AG04450 (cell line): ENCODE measurements at regions of chr7 and their contacts with region 1.

Region 1: DNA sequence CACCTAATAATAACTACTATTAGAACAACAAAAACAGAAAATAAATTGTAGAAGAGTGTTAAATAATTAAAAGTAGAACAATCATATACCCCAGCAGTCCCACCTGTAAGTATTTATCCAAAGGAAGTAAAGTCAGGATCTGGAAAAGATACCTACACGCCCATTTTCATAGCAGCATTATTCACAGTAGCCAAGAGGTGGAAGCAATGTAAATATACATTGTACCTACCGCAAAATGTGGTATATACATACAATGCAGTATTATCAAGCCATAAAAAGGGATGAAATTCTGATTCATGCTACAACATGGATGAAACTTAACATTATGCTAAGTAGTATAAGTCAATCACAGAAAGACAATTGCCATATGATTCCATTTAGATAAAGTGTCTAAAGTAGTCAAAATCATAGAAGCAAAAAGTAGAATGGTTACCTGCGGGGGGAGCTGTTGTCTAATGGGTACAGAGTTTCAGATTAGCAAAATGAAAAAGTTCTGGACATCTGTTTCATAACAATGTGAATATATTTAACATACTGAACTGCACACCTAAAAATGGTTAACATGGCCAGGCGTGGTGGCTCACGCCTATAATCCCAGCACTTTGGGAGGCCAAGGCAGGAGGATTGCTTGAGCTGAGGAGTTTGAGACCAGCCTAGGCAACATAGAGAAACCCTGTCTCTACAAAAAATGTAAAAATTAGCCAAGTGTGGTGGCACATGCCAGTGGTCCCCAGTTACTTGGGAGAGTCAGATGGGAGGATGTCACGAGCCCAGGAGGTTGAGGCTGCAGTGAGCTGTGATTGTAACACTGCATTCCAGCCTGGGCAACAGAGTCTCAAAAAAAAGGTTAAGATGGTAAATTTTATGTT is 6.0 kb upstream of the TMED4 start:
- DNase-seq: no peak
- H3K4me3 ChIP-seq: no peak overlapping the region
- H3K27ac ChIP-seq: no peak overlapping the region
- H3K27me3 ChIP-seq: peaks cover 5% of the 10 kb centered on the region
- CTCF ChIP-seq: peak; percentile 78

Region 2: DNA sequence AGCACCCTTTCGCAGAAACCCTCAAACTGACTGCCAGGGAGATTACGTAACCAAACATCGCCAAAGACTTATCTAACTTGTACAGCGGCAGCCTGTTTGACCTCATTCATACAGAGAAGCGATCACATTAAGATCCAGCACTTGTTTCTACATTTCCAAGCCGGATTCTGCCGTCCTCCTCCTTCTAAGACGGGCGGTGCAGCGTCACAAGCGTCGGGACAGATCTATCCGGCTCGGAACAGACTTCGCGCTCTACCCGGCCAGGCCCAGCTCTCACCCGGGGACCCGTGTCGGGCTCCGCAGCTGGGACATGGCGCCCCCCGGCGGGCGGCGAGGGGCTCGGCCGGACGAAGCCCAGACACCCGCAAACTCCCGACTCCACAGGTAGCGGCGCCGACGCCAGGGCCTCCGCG is 259.4 kb after region 1 on chr7:
- CTCF ChIA-PET with region 1: interaction called, 10 read pairs
- POLR2A ChIA-PET with region 1: no interaction called
- DNase-seq: peak; percentile 53
- H3K4me3 ChIP-seq: peak overlapping the region; percentile 80
- H3K27ac ChIP-seq: peak overlapping the region; percentile 77
- H3K27me3 ChIP-seq: no peaks in the 10 kb centered on the region
- CTCF ChIP-seq: peak; percentile 82